Natural killer cell (primary cell): ENCODE measurements at regions of chr16 and their contacts with region 1.

Region 1: DNA sequence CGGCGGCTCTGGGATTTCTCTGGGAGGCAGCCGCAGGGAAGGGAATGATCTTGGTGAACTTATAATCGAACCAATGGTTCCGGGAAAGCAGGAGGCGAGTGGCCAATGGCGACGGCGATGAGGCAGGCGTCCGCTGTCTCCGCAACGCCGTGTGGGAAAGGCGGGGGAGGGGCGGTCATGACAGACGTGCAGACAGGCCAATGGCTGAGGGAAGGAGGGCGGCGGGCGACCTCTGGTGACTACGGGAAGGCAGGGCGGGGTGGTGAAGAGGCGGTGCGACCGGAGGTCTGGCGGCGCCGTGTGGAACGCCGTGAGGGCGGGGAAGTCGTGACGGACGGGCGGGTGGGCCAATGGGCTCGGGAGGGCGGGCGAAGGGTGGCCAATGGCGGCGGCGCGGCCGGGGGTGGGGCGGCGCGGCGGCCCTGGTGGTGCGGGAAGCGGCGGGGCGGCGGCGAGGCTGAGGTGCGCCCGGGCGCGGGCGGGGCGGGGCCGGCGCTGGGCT is at the start of gene RAB40C:
- DNase-seq: peak; percentile 97 to 99
- ATAC-seq: peak; percentile 80 to 92 (median 83)
- H3K4me3 ChIP-seq: peak within 1 kb of the TSS; percentile 69
- H3K4me3 Mint-ChIP-seq: peak within 1 kb of the TSS; percentile 99
- H3K27ac ChIP-seq: peak within 1 kb of the TSS; percentile 96
- H3K27ac Mint-ChIP-seq: peak within 1 kb of the TSS; percentile 98 to 99
- H3K4me1 ChIP-seq: peaks cover 45% of the 10 kb centered on the region
- H3K4me1 Mint-ChIP-seq: peaks cover 17 to 52% of the 10 kb centered on the region in 2 donors
- H3K27me3 ChIP-seq: no peaks in the 10 kb centered on the region
- H3K27me3 Mint-ChIP-seq: no peaks in the 10 kb centered on the region
- CTCF ChIP-seq: no peak
- total RNA-seq, gene RAB40C: 12.7 to 20.8 (median 20.0) TPM

Region 2: GRCh38 chr16:425082-425718 is 164.5 kb before region 1 on chr16 and contains the start of gene RAB11FIP3:
- intact Hi-C with region 1: loop called (anchors 1 kb)
- DNase-seq: peak; percentile 84 to 89
- ATAC-seq: peak; percentile 86 to 93 (median 87)
- H3K4me3 ChIP-seq: peak within 1 kb of the TSS; percentile 84
- H3K4me3 Mint-ChIP-seq: peak within 1 kb of the TSS; percentile 92
- H3K27ac ChIP-seq: peak within 1 kb of the TSS; percentile 97
- H3K27ac Mint-ChIP-seq: peak within 1 kb of the TSS; percentile 89 to 91
- H3K4me1 ChIP-seq: peaks cover 24% of the 10 kb centered on the region
- H3K4me1 Mint-ChIP-seq: peaks cover 28 to 35% of the 10 kb centered on the region in 2 donors
- H3K27me3 ChIP-seq: no peaks in the 10 kb centered on the region
- H3K27me3 Mint-ChIP-seq: peaks cover 0 to 3% of the 10 kb centered on the region in 2 donors
- CTCF ChIP-seq: peak; percentile 17
- total RNA-seq, gene RAB11FIP3: 51.0 to 61.2 (median 55.3) TPM

Region 3: GRCh38 chr16:527006-527753 is 62.5 kb before region 1 on chr16 and contains the start of gene CAPN15:
- intact Hi-C with region 1: loop called (anchors 1 kb)
- DNase-seq: peak; percentile 86 to 94
- ATAC-seq: peak; percentile 76 to 91 (median 81)
- H3K4me3 ChIP-seq: peak within 1 kb of the TSS; percentile 77
- H3K4me3 Mint-ChIP-seq: peak within 1 kb of the TSS; percentile 95
- H3K27ac ChIP-seq: peak within 1 kb of the TSS; percentile 95
- H3K27ac Mint-ChIP-seq: peak within 1 kb of the TSS; percentile 89 to 90
- H3K4me1 ChIP-seq: peaks cover 65% of the 10 kb centered on the region
- H3K4me1 Mint-ChIP-seq: peaks cover 24 to 38% of the 10 kb centered on the region in 2 donors
- H3K27me3 ChIP-seq: no peaks in the 10 kb centered on the region
- H3K27me3 Mint-ChIP-seq: no peaks in the 10 kb centered on the region
- CTCF ChIP-seq: no peak
- total RNA-seq, gene CAPN15: 151 to 275 (median 186) TPM

Region 4: GRCh38 chr16:569445-570254 is 20.1 kb before region 1 on chr16 and contains the start of gene PIGQ:
- intact Hi-C with region 1: loop called (anchors 1 kb)
- DNase-seq: peak; percentile 56 to 80
- ATAC-seq: peak; percentile 77 to 90 (median 87)
- H3K4me3 ChIP-seq: peak within 1 kb of the TSS; percentile 55
- H3K4me3 Mint-ChIP-seq: peak within 1 kb of the TSS; percentile 85
- H3K27ac ChIP-seq: peak within 1 kb of the TSS; percentile 80
- H3K27ac Mint-ChIP-seq: peak within 1 kb of the TSS; percentile 83 to 88
- H3K4me1 ChIP-seq: peaks cover 43% of the 10 kb centered on the region
- H3K4me1 Mint-ChIP-seq: peaks cover 16 to 33% of the 10 kb centered on the region in 2 donors
- H3K27me3 ChIP-seq: no peaks in the 10 kb centered on the region
- H3K27me3 Mint-ChIP-seq: no peaks in the 10 kb centered on the region
- CTCF ChIP-seq: no peak
- total RNA-seq, gene PIGQ: 27.6 to 40.5 (median 37.0) TPM

Region 5: DNA sequence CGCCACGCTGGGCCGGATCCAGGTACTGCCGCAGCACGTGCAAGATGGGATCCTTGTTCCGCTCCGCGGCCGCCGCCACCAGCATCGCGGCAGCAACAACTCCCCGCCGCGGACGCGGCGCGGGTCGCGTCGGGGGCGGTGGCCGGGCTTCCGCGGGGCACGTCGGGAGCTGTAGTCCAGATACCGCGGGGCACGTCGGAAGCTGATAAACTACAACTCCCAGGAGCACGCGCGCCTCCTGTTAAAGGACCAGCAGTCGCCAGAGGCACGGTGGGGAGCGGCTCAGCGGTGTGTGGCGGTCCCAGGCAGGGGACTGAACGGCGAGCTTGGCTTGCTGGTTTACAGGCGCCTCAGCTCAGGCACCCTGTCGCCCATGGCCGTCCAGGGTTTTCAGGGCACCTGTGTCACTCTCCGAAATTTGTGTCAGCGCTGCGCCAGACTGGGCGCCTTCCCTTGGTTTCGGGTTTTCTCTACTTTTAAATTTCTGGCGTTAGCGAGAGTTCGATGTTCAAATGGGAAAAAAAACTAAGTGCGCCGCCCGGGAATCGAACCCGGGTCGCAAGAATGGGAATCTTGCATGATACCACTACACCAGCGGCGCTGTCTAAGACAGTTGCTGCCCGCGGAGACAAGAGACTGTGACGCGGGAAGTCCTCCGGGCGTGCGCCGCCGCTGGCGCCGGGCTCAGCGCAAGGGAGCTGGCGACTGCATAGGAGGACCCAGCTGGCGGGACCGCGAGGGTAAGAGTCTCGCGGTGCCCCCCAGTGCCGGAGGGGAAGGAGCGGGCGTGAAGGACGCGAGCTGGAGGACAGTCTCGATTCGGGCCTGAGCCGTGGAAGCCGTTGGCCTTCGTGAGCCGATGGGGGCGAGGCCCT is 46.7 kb after region 1 on chr16 and contains the start of gene METTL26:
- intact Hi-C with region 1: loop called (anchors 1 kb)
- DNase-seq: peak; percentile 96
- ATAC-seq: peak; percentile 82 to 92 (median 86)
- H3K4me3 ChIP-seq: peak within 1 kb of the TSS; percentile 87
- H3K4me3 Mint-ChIP-seq: peak within 1 kb of the TSS; percentile 98
- H3K27ac ChIP-seq: peak within 1 kb of the TSS; percentile 82
- H3K27ac Mint-ChIP-seq: peak within 1 kb of the TSS; percentile 98 to 100
- H3K4me1 ChIP-seq: peaks cover 34% of the 10 kb centered on the region
- H3K4me1 Mint-ChIP-seq: peaks cover 7 to 18% of the 10 kb centered on the region in 2 donors
- H3K27me3 ChIP-seq: no peaks in the 10 kb centered on the region
- H3K27me3 Mint-ChIP-seq: peaks cover 0 to 3% of the 10 kb centered on the region in 2 donors
- CTCF ChIP-seq: no peak
- total RNA-seq, gene METTL26: 33.7 to 36.3 (median 36.1) TPM